A549 (cell line): ENCODE measurements at regions of chr12 and their contacts with region 1.

Region 1: DNA sequence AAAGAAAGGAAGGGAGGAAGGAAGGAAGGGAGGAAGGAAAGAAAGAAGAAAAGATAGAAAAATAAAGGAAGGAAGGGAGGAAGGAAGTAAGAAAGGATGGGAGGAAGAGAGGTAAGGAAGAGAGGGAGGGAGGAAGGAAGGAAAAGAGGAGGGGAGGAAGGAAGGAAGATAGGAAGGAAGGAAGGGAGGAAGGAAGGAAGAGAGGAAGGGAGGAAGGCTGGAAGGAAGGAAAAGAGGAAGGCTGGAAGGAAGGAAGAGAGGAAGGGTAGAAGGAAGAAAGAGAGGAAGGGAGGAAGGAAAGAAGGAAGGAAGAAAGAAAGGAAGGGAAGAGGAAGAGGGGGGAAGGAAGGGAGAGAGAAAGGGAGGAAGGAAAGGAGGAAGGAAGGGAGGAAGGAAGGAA is 12.8 kb upstream of the WIF1 start:
- DNase-seq: no peak
- ATAC-seq: no peak
- H3K4me3 ChIP-seq: no peak overlapping the region
- H3K27ac ChIP-seq: no peak overlapping the region
- H3K4me1 ChIP-seq: no peaks in the 10 kb centered on the region
- CTCF ChIP-seq: no peak
- EP300 ChIP-seq: no peak
- POLR2A ChIP-seq: no peak
- RAD21 ChIP-seq: no peak

Region 2: DNA sequence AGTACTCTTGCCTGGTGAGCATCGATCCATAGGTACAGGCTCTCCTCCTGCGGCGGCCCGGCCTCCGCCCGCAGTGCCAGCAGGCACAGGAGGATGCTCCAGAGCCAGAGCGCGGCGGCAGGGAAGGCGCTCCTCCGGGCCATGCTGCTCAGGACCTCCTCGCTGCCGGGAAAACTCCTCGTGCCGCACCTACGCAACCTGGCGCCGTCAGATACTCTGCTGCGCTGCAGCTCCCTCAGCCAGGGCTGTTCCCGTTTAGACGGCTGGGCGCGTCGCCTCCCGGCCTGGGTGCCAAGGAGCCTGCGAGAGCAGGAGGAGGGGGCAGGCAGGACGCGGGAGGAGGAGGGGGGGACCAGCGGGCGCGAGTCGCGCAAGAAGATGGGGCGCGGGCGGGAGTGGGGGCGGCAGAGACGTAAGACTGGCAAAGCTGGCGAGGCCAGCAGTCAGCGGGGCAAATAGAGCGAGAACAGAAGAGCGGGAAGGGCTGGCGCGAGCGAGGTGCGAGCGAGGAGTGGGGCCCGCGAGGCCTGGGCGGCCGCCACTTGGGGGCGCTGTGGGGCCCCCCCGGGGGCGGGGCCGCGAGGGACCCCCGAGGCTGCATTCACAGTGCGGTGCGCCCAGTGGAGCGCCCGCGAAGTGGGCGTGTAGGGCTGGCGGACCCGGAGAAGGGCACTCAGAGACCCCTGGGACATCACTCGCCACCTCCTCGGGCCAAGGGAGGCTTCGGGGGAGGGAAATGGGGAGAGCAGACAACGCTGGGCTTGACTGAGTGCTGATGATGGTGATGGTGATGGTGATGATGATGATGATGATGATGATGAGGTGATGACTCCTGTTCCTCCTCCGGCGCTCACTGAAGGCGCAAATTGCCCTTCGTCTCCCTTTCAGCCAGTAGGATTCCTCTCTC is 12.6 kb before region 1 on chr12 and contains the start of gene WIF1:
- CTCF ChIA-PET with region 1: interaction called, 26 read pairs
- POLR2A ChIA-PET with region 1: no interaction called
- DNase-seq: peak in 1 of 2 experiments; percentile 29
- ATAC-seq: peak; percentile 83 to 92
- H3K4me3 ChIP-seq: peak within 1 kb of the TSS; percentile 40
- H3K27ac ChIP-seq: 0 out of 6 replicates have a peak within 1 kb of the TSS, but pooled peaks of 1 of the 2 experiments have one; percentile 19
- H3K4me1 ChIP-seq: no peaks in the 10 kb centered on the region; the same call in 2 of the 3 replicates
- CTCF ChIP-seq: peak; percentile 43; the same call in 2 of the 3 replicates
- EP300 ChIP-seq: no peak
- POLR2A ChIP-seq: no peak
- RAD21 ChIP-seq: no peak
- polyA plus RNA-seq, gene WIF1: not detected in 2 replicates

Region 3: GRCh38 chr12:65156366-65156841 is 22.5 kb after region 1 on chr12:
- CTCF ChIA-PET with region 1: no interaction called
- POLR2A ChIA-PET with region 1: no interaction called
- DNase-seq: no peak
- ATAC-seq: no peak
- H3K4me3 ChIP-seq: no peak overlapping the region
- H3K27ac ChIP-seq: peak overlapping the region; percentile 12 to 45; a peak in 3 of 6 replicates
- H3K4me1 ChIP-seq: 0 out of 3 replicates have a peak, but pooled peaks cover 4% of the 10 kb centered on the region
- CTCF ChIP-seq: no peak
- EP300 ChIP-seq: no peak
- POLR2A ChIP-seq: no peak
- RAD21 ChIP-seq: no peak

Region 4: GRCh38 chr12:65182012-65182739 is 48.3 kb after region 1 on chr12:
- CTCF ChIA-PET with region 1: no interaction called
- POLR2A ChIA-PET with region 1: no interaction called
- DNase-seq: no peak
- ATAC-seq: no peak
- H3K4me3 ChIP-seq: no peak overlapping the region
- H3K27ac ChIP-seq: no peak overlapping the region
- H3K4me1 ChIP-seq: peaks cover 8% of the 10 kb centered on the region; the same call in 2 of the 3 replicates
- CTCF ChIP-seq: no peak
- EP300 ChIP-seq: no peak
- POLR2A ChIP-seq: no peak
- RAD21 ChIP-seq: no peak